ENCODE measurements at regions of chr1 and their contacts with region 1.

Region 1: GRCh38 chr1:109090196-109091077 is at the start of gene TMEM167B:
- DNase-seq: peak; percentile 84
- ATAC-seq: peak; percentile 88
- H3K4me3 ChIP-seq: peak within 1 kb of the TSS; percentile 83 to 86 (median 85)
- H3K27ac ChIP-seq: peak within 1 kb of the TSS; percentile 90
- H3K4me1 ChIP-seq: peaks cover 30% of the 10 kb centered on the region
- H3K27me3 ChIP-seq: no peaks in the 10 kb centered on the region; a peak in 1 of 5 replicates
- CTCF ChIP-seq: peak; percentile 27; the same call in 1 of the 2 replicates
- EP300 ChIP-seq: peak; percentile 36 to 40; a peak in 2 of 4 replicates
- POLR2A ChIP-seq: peak in 1 of 2 experiments; percentile 71; a peak in 2 of 4 replicates
- RAD21 ChIP-seq: no peak
- total RNA-seq, gene TMEM167B: 22.4 and 24.4 TPM in 2 replicates

Region 2: DNA sequence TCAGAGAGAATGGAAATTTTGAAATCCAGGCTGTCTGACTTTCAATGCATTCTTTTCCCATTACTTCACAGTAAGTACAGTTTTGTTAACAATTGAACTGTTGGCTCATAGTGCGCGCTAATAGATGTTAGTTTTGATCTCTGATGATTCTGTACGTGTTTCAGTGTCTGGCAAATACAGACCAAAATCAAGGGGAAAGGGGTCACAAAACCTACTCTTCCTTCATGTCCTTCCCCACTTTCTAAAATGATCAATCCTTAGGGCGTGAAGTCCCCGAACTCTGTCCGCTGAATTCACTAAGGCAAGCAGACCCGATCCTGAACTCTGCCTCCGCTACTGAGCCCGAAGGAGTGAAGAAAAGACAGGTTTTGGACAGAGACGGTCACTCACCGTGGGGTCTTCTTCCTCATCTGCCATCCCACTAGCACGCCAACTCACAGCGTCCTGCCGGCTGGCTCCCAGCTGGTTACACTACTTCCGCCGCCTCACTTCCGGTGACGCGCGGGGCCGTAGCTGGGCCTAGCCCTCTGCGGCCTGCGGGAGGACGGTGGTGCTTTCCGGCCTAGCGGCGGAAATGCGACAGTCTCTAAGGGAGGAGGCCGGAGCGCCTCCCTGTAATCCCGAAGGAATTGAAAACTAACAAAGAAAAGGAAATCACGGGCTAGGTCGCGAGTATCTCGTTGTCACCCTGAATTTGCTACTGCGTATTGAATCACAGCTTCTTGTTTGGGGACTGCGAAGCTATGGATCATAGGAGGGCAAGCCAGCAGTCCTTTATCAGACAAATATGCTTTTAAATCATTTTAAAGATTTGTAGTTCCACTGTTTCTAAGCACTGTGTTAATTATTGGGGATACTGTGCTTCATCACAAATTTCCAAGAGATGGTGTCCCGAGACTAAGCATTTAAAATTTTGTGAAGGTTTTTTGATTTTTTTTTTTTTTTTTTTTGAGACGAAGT is 14.6 kb before region 1 on chr1 and contains the start of gene TAF13:
- CTCF ChIA-PET with region 1: interaction called, 4 read pairs
- POLR2A ChIA-PET with region 1: interaction called, 19 read pairs
- in situ Hi-C with region 1: no loop called
- intact Hi-C with region 1: no loop called
- DNase-seq: peak; percentile 89
- ATAC-seq: peak; percentile 100
- H3K4me3 ChIP-seq: peak within 1 kb of the TSS; percentile 67 to 90 (median 86)
- H3K27ac ChIP-seq: peak within 1 kb of the TSS; percentile 96
- H3K4me1 ChIP-seq: peaks cover 40% of the 10 kb centered on the region
- H3K27me3 ChIP-seq: no peaks in the 10 kb centered on the region; a peak in 2 of 5 replicates
- CTCF ChIP-seq: peak; percentile 54
- EP300 ChIP-seq: no peak
- POLR2A ChIP-seq: peak; percentile 96 to 97
- RAD21 ChIP-seq: peak; percentile 9; the same call in 1 of the 2 replicates
- total RNA-seq, gene TAF13: 36.3 and 62.1 TPM in 2 replicates

Region 3: DNA sequence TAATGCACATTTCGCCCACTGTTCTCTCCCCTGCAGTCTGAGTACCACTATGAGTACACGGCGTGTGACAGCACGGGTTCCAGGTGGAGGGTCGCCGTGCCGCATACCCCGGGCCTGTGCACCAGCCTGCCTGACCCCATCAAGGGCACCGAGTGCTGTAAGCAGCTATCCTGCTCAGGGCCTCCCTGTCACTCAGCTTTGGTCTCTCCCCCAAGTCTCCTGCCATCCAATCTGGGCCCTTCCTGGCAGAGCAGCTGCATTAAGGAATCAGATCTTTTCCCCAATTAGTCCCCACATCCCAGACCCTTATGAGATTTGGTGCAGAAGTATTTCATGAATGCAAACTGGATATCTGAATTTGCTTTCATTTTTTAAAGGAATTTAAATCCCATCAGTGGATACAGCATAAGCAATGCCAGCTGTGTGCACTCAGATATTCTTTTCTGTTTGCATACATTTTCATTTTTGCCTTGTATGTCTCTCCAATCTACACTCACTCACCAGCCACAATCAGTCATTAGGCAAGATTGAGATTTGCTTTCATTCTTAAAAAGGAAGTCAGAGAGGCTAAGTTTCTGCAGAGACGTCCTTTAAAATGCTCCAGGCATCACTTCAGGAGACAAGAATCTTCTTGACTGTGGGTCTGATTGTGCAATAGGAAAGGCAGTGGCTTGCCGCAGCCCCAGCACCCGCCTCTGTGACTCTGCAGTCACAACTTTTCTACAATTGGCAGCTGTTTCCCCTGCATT is 71.6 kb after region 1 on chr1:
- CTCF ChIA-PET with region 1: no interaction called
- POLR2A ChIA-PET with region 1: no interaction called
- in situ Hi-C with region 1: no loop called
- intact Hi-C with region 1: no loop called
- DNase-seq: no peak
- ATAC-seq: peak; percentile 57; the same call in 2 of the 3 replicates
- H3K4me3 ChIP-seq: no peak overlapping the region
- H3K27ac ChIP-seq: no peak overlapping the region
- H3K4me1 ChIP-seq: peaks cover 55% of the 10 kb centered on the region
- H3K27me3 ChIP-seq: peaks cover 1 to 4% of the 10 kb centered on the region in 2 experiments; a peak in 2 of 5 replicates
- CTCF ChIP-seq: no peak
- EP300 ChIP-seq: no peak
- POLR2A ChIP-seq: no peak
- RAD21 ChIP-seq: no peak

Measured in HepG2 (cell line).